ENCODE measurements at regions of chr2 and their contacts with region 1.

Region 1: DNA sequence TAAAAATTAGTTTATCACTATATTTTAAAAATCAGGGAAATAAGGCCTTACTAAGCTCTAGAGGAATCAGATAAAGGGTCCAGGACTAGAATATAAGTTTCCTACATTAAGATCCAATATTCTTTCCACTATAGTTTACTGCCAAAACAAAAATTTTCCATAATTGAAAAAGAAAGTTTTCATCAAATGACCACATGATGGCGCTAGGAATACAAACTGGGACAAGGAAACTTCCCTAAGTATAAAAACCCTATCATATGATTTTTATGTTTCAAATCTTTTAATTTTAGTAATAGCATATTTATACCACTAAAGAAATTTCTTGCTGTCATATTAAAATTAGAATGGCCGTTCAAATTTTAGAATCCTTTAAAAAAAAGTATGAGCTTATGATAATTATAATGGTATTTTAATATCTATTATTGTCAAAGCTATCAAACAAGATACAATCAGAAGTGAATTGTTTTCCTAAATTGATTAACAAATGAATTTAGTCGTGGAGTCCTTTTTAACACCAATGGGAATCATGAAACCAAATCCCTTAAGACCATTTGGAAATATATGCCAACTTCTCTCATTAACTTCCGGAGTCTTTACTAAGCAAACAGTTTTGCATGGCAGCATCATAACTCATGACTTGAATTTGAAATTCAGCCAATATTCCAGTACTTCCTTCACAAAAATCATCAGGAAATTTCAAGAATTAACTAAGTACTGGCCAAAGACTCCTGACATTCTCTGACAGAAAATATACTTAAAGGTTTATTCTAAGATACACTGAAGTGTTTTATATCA is 70.3 kb downstream of the SCN1A start:
- DNase-seq: peak; percentile 3
- H3K27ac ChIP-seq: no peak overlapping the region
- CTCF ChIP-seq: peak; percentile 31; the same call in 1 of the 2 replicates

Region 2: DNA sequence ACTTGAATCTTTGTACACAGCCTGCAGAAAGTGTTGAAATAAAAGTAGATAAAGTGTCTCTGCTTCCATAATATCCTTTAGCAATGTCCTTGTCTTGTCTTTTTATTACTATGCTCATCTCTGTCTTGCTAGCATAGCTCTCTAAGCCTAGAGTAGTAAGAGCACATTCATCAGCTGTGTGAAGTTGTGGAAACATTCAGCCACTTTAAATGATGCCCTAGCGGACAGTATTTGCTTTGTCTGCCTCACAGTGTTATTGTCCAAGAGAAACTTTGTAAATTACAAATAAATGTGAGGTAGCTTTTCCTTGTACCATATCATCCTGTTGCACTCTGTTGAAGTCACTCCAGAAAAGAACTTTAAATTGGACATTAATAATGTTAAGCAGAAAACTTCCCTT is 43.7 kb before region 1 on chr2:
- CTCF ChIA-PET with region 1: no interaction called
- POLR2A ChIA-PET with region 1: no interaction called
- DNase-seq: no peak
- H3K27ac ChIP-seq: no peak overlapping the region
- CTCF ChIP-seq: no peak

Region 3: DNA sequence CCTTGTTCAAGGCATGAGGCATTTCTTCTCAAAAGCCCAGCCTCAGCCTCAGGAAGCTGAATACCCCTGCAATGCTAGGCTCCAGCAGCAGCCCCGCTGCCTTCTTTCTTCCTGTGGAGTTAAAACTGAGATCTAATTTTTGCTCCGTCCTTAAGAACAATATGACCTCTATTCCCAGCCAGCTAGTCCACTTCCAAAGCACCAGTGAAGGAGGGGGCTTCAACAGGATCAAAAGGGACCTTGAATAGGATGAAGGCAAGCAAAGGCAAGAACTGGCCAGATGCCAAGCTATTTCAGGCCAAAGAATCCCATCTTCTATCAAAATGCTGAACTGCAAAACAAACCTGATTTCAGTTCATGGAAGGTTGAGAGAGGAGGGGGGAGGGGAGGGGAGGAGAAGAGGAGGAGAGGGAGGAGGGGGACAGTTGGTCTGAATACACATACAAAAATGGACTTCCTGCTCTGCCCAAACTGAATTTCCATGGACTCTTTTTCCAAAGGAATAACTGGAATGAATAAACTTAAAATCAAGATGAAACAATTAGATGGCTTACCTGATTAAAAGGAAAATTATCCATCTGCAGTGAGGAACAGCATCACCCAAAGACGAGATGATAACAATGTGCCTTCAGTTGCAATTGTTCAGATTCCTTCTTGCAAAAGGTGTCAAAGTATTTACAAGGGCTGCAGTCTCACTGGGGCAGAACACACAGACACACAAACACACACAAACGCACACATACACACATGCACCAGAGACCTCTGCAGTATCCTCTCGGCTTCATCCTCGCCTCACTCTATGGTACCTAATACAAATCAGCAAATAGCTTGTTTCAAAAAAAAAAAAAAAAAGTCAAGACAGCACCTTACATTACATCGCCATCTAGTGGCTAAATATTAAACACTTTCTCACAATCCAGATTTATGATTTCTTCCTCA is 69.9 kb after region 1 on chr2 and contains the start of gene SCN1A:
- CTCF ChIA-PET with region 1: interaction called, 20 read pairs
- POLR2A ChIA-PET with region 1: no interaction called
- DNase-seq: peak; percentile 10
- H3K27ac ChIP-seq: no peak within 1 kb of the TSS
- CTCF ChIP-seq: peak; percentile 77

Measured in RWPE1 (cell line).